BJ (cell line): ENCODE measurements at regions of chr16 and their contacts with region 1.

Region 1: GRCh38 chr16:70703041-70703834 is 17.4 kb upstream of the MTSS2 start:
- DNase-seq: peak; percentile 90
- H3K4me3 ChIP-seq: no peak overlapping the region
- H3K27me3 ChIP-seq: no peaks in the 10 kb centered on the region
- CTCF ChIP-seq: peak; percentile 71

Region 2: DNA sequence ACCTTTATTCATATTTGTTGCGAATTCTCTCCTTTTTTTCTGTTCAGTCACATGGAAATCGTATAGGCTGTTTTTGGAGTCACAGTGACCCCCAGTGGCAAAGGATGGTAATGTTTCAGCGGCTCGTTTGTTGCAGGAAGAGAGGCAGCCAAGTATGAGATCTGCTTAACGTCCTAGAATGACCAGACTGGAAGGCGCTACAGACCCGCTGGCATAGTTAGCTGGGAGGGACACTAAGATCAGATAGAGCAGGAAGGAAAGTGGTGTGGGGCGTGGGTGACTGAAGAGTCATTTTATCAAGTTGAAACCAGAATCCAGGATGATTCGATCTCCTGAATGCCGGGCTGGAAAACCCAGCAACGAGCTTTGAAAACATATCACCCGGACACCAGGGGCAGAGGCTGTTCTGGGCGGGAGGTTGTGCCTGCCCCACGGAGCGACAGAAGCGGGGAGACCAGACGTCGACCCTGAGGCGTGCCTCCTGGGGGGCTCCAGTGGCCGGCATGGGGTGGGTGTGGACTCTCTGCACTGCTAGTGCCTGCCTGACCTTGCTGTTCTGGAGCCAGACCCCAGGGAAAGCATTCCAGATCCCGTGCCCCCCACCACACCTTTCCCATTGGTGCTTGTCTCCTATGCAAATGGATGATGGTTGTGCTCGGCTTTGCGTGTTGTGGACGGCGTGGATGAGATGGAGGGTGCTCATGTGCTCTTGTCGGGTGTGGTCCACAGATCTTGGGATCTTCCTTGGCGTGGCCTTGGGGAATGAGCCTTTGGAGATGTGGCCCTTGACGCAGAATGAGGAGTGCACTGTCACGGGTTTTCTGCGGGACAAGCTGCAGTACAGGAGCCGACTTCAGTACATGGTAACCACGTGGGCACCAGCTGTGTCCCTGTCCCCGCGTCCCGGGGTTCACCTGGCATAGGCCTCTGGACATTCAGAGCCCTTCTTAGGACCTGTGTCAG is 49.1 kb before region 1 on chr16:
- CTCF ChIA-PET with region 1: no interaction called
- POLR2A ChIA-PET with region 1: no interaction called
- DNase-seq: peak; percentile 48
- H3K4me3 ChIP-seq: peak overlapping the region; percentile 17; the same call in 1 of the 2 replicates
- H3K27me3 ChIP-seq: no peaks in the 10 kb centered on the region
- CTCF ChIP-seq: peak; percentile 75

Region 3: GRCh38 chr16:70685938-70686375 is 17.3 kb before region 1 on chr16 and contains the start of gene MTSS2:
- CTCF ChIA-PET with region 1: interaction called, 22 read pairs
- POLR2A ChIA-PET with region 1: interaction called, 3 read pairs
- DNase-seq: no peak
- H3K4me3 ChIP-seq: peak within 1 kb of the TSS; percentile 92
- H3K27me3 ChIP-seq: no peaks in the 10 kb centered on the region
- CTCF ChIP-seq: no peak
- polyA plus RNA-seq, gene MTSS2: 86.4 and 170 TPM in 2 replicates

Region 4: DNA sequence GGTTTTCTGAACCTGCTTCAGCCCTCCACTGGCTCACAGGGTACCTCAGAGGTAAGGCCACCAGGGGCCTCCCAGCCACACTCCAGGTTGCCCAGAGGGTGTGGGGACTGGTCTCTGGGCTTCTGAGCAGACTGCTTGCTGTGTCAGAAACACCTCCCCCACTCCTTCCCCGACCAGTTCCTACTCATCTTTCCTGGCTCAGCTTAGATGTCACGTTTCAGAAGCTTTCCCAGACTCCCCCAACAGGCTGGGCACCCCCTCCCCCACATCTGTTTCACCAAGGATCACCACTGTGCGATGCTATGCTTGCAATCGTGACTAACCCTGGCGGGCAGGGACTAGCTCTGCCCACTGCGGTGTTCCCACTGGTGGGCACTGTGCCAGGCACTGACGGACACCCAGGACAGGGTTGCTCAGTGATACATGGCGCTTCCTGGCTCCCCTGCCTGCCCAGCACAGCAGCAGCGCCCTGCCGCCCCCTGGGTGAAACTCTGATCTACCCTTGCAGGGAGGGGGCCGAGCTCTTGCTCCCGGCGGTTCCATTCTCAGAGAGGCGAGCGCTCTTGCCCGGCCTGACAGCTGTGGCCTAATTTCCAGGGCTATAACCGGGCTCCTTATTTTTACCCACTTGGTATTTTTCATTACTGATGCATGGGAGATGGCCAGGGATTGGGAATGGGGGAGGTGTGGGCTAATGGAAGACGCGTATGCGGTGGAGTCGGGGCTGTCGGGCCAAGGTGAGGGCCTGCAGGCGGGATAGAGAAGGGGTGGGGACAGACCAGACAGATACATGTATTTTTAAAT is 12.0 kb after region 1 on chr16:
- CTCF ChIA-PET with region 1: interaction called, 9 read pairs
- POLR2A ChIA-PET with region 1: interaction called, 16 read pairs
- DNase-seq: peak; percentile 98
- H3K4me3 ChIP-seq: no peak overlapping the region
- H3K27me3 ChIP-seq: no peaks in the 10 kb centered on the region
- CTCF ChIP-seq: peak; percentile 26